ENCODE measurements at regions of chr11 and their contacts with region 1.

Region 1: DNA sequence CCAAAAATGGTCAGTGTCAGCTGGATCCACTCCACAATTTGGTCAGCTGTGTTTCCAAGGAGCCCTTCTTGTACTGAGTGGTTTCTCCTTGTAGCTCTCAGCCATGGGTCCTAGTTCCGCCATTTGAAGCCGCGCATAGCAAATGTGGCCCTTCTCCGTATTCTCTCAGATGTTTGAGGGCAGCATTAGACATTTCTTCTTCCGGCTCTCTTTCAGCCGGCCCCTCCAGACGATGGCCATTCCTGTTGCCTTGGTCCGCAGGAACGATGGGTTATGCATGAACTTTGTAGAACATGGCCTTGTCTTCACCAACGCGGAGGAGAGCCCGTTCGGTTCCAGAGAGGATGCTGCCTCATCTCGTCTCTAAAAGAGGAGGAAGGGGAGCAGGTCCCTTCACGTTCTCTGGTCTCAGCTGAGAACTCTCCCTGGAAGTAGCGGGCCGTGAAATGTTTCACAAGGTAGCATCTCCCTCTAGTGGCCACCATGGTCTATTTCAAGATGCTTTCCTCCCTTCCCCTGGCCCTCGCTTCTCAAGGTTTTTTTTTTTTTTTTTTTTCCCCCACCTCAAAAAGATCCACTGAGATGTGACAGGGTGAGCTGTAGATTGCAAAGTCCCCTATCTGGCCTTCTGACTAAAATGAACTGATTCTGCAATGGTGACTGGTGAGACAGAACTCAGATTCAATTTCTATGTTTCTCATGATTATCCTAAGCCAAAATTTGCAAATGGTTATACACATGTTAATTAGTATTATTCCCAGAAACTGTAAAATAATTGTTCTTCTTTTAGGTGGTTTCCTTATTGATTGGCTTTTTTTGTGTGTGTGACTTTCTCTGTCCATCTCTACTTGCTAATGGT is 19.8 kb upstream of the PLET1 start:
- DNase-seq: peak; percentile 37
- ATAC-seq: peak; percentile 97
- H3K4me3 ChIP-seq: peak overlapping the region; percentile 61; the same call in 1 of the 2 replicates
- H3K27ac ChIP-seq: no peak overlapping the region
- H3K4me1 ChIP-seq: no peaks in the 10 kb centered on the region
- H3K27me3 ChIP-seq: no peaks in the 10 kb centered on the region
- CTCF ChIP-seq: peak; percentile 71 to 86 (median 74)
- EP300 ChIP-seq: no peak
- POLR2A ChIP-seq: peak; percentile 25; the same call in 1 of the 2 replicates
- RAD21 ChIP-seq: peak; percentile 80

Region 2: GRCh38 chr11:111938687-111939160 is 341.8 kb before region 1 on chr11:
- CTCF ChIA-PET with region 1: interaction called, 7 read pairs
- POLR2A ChIA-PET with region 1: no interaction called
- RAD21 ChIA-PET with region 1: no interaction called
- SMC1A ChIA-PET with region 1: interaction called, 3 read pairs
- in situ Hi-C with region 1: loop called (anchors 10 kb)
- intact Hi-C with region 1: loop called (anchors 2 kb)
- DNase-seq: peak; percentile 71
- ATAC-seq: peak; percentile 93
- H3K4me3 ChIP-seq: peak overlapping the region; percentile 47
- H3K27ac ChIP-seq: peak overlapping the region; percentile 35; the same call in 1 of the 2 replicates
- H3K4me1 ChIP-seq: peaks cover 22% of the 10 kb centered on the region
- H3K27me3 ChIP-seq: 0 out of 4 replicates have a peak, but pooled peaks cover 0 to 1% of the 10 kb centered on the region in 2 experiments
- CTCF ChIP-seq: no peak
- EP300 ChIP-seq: peak in 1 of 2 experiments; percentile 65; a peak in 1 of 4 replicates
- POLR2A ChIP-seq: no peak
- RAD21 ChIP-seq: no peak

Region 3: DNA sequence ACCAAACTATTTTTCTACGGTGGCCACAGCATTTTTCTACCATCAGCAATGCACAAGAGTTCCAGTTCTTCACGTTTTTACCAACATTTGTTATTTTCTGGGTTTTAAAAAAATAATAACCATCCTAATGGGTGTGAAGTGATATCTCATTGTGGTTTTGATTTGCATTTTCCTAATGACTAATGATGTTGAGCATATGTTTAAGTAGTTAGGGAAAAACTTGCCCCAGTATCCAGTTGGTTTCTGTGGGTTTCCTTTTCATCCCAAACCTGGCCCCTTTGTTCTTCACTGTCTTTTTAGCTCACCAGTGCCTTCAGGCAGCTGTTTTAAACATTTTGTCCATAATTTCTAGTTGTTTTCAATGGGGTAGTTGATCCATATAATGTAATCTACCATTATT is 69.0 kb before region 1 on chr11:
- CTCF ChIA-PET with region 1: interaction called, 314 read pairs
- POLR2A ChIA-PET with region 1: interaction called, 3 read pairs
- RAD21 ChIA-PET with region 1: interaction called, 15 read pairs
- SMC1A ChIA-PET with region 1: interaction called, 161 read pairs
- in situ Hi-C with region 1: no loop called
- intact Hi-C with region 1: no loop called
- DNase-seq: no peak
- ATAC-seq: no peak; the same call in 2 of the 3 replicates
- H3K4me3 ChIP-seq: no peak overlapping the region
- H3K27ac ChIP-seq: no peak overlapping the region
- H3K4me1 ChIP-seq: no peaks in the 10 kb centered on the region
- H3K27me3 ChIP-seq: no peaks in the 10 kb centered on the region
- CTCF ChIP-seq: no peak
- EP300 ChIP-seq: no peak
- POLR2A ChIP-seq: no peak
- RAD21 ChIP-seq: no peak

Region 4: GRCh38 chr11:112226062-112226830 is 54.3 kb before region 1 on chr11 and contains the start of gene PTS:
- CTCF ChIA-PET with region 1: interaction called, 314 read pairs
- POLR2A ChIA-PET with region 1: interaction called, 4 read pairs
- RAD21 ChIA-PET with region 1: interaction called, 62 read pairs
- SMC1A ChIA-PET with region 1: interaction called, 161 read pairs
- in situ Hi-C with region 1: loop called (anchors 5 kb)
- intact Hi-C with region 1: no loop called
- DNase-seq: peak; percentile 64
- ATAC-seq: peak; percentile 96
- H3K4me3 ChIP-seq: peak within 1 kb of the TSS; percentile 98
- H3K27ac ChIP-seq: peak within 1 kb of the TSS; percentile 95
- H3K4me1 ChIP-seq: peaks cover 7% of the 10 kb centered on the region
- H3K27me3 ChIP-seq: no peaks in the 10 kb centered on the region
- CTCF ChIP-seq: no peak
- EP300 ChIP-seq: no peak; a peak in 1 of 4 replicates
- POLR2A ChIP-seq: peak; percentile 99
- RAD21 ChIP-seq: no peak
- polyA plus RNA-seq, gene PTS: 45.0 to 47.6 TPM

Region 5: GRCh38 chr11:112345708-112346107 is 65.2 kb after region 1 on chr11:
- CTCF ChIA-PET with region 1: no interaction called
- POLR2A ChIA-PET with region 1: no interaction called
- RAD21 ChIA-PET with region 1: no interaction called
- SMC1A ChIA-PET with region 1: no interaction called
- in situ Hi-C with region 1: no loop called
- intact Hi-C with region 1: no loop called
- DNase-seq: no peak
- ATAC-seq: peak; percentile 54
- H3K4me3 ChIP-seq: no peak overlapping the region
- H3K27ac ChIP-seq: no peak overlapping the region
- H3K4me1 ChIP-seq: 0 out of 2 replicates have a peak, but pooled peaks cover 4% of the 10 kb centered on the region
- H3K27me3 ChIP-seq: no peaks in the 10 kb centered on the region; a peak in 1 of 4 replicates
- CTCF ChIP-seq: 0 out of 6 replicates have a peak, but pooled peaks of 1 of the 3 experiments have one; percentile 16
- EP300 ChIP-seq: no peak
- POLR2A ChIP-seq: no peak
- RAD21 ChIP-seq: no peak

Region 6: DNA sequence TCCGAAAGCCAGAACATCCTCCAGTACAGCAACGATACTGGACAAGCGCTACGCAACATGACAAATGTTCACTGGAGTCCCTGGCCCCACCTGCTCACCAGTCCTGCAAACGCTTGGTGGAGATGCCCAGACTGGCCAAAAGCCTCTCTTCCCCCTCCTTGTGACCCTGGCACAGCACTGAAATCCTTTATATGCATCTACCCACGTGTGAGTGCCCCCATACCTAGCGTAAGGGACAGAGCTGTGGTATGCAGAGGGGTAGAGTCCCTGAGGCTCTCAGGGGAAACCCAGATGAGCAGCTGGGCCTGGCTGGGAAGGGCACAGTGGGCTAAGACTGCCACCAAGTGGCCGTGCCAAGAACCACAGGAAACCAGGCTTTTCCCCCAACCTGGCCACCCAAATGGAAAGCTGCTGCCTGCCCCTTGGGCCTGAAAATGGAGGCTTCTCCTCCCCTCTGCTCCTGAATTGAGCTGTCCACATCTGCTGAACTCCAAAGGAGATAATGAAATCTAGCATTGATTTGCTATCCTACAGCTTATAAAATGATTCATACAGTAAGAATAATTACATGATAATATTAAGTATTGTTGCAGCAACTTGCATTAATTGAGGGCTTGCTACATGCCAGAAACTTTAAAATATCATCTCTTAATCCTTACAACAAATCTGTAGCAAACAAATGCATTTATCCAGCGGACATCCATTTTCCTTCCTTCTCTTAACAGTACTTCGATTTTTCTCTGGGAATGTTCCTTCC is 1009.1 kb after region 1 on chr11:
- CTCF ChIA-PET with region 1: interaction called, 10 read pairs
- POLR2A ChIA-PET with region 1: no interaction called
- RAD21 ChIA-PET with region 1: interaction called, 3 read pairs
- SMC1A ChIA-PET with region 1: interaction called, 4 read pairs
- in situ Hi-C with region 1: loop called (anchors 5 kb)
- intact Hi-C with region 1: no loop called
- DNase-seq: peak; percentile 33
- ATAC-seq: peak; percentile 99
- H3K4me3 ChIP-seq: no peak overlapping the region
- H3K27ac ChIP-seq: no peak overlapping the region
- H3K4me1 ChIP-seq: no peaks in the 10 kb centered on the region
- H3K27me3 ChIP-seq: 0 out of 4 replicates have a peak, but pooled peaks cover 0 to 2% of the 10 kb centered on the region in 2 experiments
- CTCF ChIP-seq: peak; percentile 89 to 98 (median 97)
- EP300 ChIP-seq: no peak
- POLR2A ChIP-seq: no peak
- RAD21 ChIP-seq: peak; percentile 96